ENCODE measurements at regions of chr16 and their contacts with region 1.

Region 1: DNA sequence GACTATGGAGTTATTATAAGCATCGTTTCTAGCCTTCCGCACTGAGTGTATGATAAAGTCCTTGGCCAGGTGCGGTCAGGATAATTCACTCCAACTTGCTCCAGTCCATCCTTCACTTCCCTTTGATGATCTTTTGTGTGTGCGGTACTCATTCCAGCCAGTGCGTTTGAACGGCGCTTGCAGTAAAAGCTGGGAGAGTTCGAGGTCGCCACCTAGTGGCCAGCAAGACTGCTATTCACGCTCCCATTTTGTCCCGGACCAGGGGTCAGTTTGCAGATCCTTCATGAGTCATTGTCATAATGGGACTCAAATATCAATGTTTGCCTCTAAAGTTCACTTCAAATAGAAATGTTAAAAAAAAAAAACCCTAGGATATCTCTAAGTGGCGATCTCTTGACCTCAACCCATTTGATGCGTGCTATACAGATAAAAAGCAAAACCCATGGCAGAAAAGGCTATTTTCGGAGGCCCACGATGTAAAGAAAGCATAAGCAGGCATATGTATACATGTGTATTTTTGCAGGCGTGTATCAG is 417.1 kb downstream of the TMEM114 start:
- DNase-seq: peak; percentile 62
- ATAC-seq: peak; percentile 65

Region 2: DNA sequence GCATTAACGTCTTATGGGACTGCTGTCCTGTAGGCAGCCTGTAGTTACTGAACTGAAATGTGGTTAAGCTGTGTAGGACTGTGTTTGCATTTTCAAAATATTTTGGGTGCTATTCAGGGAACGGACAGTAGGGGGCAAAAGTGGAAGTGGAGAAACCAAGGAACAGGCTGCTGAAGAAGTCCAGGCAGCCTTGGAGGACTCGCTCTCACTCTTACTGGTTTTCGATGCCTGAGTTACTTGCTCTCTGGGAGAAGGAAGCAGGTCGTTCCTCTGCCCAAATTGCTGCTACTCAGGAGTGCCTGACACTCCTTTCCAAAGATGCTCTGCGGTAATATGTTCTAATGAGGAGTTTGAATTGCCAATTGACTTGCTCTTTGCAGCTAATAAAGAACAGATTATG is 905.0 kb before region 1 on chr16:
- intact Hi-C with region 1: loop called (anchors 10 kb)
- DNase-seq: no peak
- ATAC-seq: peak; percentile 60